ENCODE measurements at regions of chr3 and their contacts with region 1.

Region 1: DNA sequence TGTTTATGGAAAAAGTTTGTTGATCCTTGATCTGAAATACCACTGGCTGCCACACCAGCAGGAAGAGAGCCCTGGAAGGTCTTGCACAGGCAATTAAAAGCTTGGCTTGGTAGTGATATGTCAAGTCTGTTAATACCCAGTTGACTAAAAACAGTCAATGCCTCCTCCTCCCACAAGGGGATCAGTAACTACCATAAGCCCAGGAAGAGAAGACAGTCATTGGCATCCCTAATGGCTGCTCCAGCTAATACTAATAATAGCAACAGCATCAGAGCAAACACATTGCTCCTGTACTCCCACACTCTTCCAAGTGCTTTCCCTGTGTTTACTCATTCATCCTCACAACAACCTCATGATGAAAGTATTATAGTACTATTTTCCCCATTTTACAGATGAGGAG is 528.6 kb downstream of the TAFA4 start:
- DNase-seq: no peak
- H3K4me3 ChIP-seq: no peak overlapping the region
- CTCF ChIP-seq: no peak
- POLR2A ChIP-seq: no peak

Region 2: DNA sequence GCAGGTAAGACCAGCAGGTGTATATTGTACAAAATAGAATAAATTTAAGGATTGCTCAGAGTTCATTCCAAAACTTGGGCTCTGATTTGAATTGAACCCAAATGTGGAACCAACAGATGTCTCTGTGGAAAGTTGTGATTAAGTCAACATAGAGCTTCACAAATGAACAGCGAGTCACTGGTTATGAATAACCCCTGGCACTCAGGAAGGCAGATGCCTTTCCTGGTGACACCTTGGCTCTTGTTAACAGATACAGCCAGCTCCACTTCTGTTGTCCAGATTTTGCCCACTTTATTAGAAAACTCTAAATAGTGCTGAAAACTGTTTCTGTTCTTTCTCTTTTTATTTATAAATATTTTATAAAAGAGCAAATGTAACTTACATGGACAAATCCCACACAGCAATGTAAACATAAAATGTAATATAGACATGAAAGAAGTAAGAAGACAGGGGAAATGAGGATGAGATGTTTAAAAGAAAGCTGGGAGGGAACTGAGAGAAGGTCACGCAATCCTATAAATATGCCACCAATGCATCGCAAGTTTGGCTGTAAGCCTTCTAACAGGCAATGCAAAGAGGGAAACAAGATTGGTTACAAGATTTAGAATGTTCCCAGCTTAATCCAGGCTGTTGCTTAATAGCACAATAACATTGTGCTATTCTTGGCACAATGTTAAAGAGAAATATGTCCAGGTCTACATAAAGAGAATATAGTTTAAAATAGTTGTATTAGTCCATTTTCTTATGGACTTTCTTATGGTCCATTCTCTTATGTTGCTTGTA is 33.1 kb after region 1 on chr3:
- intact Hi-C with region 1: loop called (anchors 1 kb)
- DNase-seq: no peak
- H3K4me3 ChIP-seq: no peak overlapping the region
- CTCF ChIP-seq: no peak
- POLR2A ChIP-seq: no peak